Activated B cell treated with CpG ODN at 0.5 μM for 24 hours (primary cell): ENCODE measurements at regions of chrX and their contacts with region 1.

Region 1: GRCh38 chrX:3697701-3698279 is 15.7 kb downstream of the PRKX start:
- DNase-seq: no peak
- ATAC-seq: peak; percentile 65
- H3K4me3 Mint-ChIP-seq: no peak overlapping the region
- H3K27ac Mint-ChIP-seq: peak overlapping the region; percentile 64
- H3K4me1 Mint-ChIP-seq: peaks cover 58% of the 10 kb centered on the region
- H3K27me3 Mint-ChIP-seq: no peaks in the 10 kb centered on the region
- CTCF ChIP-seq: no peak

Region 2: DNA sequence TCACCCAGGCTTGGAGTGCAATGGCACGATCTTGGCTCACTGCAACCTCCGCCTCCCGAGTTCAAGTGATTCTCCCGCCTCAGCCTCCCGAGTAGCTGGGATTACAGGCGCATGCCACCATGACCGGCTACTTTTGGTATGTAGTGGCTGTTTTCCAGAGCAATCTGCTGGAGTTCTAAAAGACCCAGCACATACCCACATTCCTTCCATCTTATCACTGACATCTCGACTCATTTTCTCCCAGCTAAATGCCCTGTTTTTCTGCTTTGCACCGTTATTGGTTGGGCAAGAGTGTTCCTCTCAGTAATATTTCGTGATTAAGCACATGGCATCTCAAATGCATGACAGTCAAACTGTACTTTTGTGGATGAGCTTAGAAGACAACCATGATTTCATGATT is 38.0 kb before region 1 on chrX:
- CTCF ChIA-PET with region 1: no interaction called
- POLR2A ChIA-PET with region 1: no interaction called
- intact Hi-C with region 1: loop called (anchors 5 kb)
- DNase-seq: no peak
- ATAC-seq: no peak
- H3K4me3 Mint-ChIP-seq: no peak overlapping the region
- H3K27ac Mint-ChIP-seq: no peak overlapping the region
- H3K4me1 Mint-ChIP-seq: peaks cover 19% of the 10 kb centered on the region
- H3K27me3 Mint-ChIP-seq: no peaks in the 10 kb centered on the region
- CTCF ChIP-seq: no peak